ENCODE measurements at regions of chr1 and their contacts with region 1.

Region 1: DNA sequence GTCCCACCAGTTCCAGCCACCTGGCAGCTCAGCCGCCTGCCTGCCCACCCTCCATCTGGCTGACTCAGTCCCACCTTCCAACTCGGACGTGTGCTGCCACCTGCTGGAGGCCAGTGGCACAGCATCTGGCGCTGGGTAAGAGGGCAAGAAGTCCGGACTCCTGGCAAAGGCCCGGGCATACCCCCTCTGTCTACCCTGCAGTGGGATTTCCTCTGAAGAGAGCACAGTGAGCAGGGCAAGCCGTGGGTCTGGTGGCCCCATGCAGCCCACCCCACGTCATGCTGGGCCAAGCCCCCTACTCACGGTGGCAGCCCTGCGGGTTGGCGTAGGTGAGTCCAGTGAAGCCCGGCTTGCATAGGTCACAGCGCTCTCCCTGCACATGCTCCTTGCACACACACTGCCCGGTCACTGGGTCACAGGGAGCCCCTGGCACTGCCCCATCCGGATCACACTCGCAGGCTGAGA is 24.5 kb downstream of the LAMB3 start:
- DNase-seq: peak; percentile 75
- ATAC-seq: peak; percentile 63 to 76

Region 2: GRCh38 chr1:209556162-209556690 is 71.5 kb before region 1 on chr1:
- intact Hi-C with region 1: no loop called
- DNase-seq: no peak
- ATAC-seq: no peak

Region 3: GRCh38 chr1:209576798-209577197 is 51.0 kb before region 1 on chr1:
- intact Hi-C with region 1: loop called in 1 of 2 experiments (anchors 10 kb)
- DNase-seq: peak; percentile 82
- ATAC-seq: peak; percentile 94 to 96

Region 4: DNA sequence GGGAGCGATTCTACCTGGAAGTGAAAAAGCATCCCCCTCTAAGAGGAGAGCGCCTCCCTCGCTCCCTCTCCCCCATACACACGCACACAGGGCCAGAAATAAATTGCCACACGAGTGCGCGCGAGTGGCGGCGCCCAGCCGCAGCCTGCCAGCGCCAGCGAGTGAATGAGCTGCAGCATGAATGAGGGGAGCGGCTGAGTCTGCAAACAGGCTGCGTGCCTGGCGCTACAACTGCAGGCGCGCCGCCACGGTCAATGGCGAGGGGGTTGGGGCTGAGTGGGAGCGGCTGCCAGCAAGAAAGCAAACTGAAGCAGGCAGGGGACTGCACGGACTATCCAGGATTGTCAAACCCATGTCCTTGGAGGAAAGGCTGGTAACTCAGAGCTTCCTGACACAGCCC is 42.1 kb before region 1 on chr1:
- intact Hi-C with region 1: loop called in 1 of 2 experiments (anchors 5 kb)
- DNase-seq: peak; percentile 54
- ATAC-seq: peak; percentile 86 to 94

Region 5: DNA sequence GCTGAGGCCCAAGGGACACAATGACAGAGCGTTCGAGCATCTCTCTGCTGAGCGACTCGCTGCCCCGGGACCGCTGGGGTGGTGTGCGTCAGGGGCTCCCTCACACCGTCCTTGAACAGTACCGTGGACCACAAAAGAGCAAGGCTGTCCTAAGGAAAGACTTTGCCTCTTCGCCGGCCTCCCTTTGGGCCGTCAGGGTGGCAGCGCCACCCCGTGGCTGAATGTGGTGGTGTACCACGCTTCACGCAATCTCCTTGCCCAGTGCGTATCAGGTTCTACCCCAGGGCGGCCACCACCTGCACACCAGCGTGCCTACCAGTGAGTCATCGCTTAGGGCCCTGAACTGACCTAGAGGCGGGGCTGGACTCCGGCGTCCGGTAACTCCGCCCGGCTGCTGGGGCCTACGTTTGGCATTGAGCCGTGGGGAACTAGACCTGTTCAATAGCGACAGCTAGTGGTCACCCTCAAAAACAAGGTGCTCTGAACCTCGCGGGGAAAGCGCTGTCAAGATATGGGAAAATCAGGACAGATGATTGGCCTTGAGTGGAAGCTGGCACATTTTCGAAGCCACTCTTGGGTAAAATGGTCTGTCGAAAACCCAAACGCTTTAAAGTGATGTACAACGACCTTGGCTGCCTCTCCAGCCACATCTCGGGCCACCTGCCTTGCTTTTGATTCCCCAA is 120.0 kb after region 1 on chr1:
- intact Hi-C with region 1: loop called in 1 of 2 experiments (anchors 10 kb)
- DNase-seq: peak; percentile 94
- ATAC-seq: peak; percentile 96 to 99

Measured in left cardiac atrium (tissue), 4 donors.